AG04450 (cell line): ENCODE measurements at regions of chr18 and their contacts with region 1.

Region 1: DNA sequence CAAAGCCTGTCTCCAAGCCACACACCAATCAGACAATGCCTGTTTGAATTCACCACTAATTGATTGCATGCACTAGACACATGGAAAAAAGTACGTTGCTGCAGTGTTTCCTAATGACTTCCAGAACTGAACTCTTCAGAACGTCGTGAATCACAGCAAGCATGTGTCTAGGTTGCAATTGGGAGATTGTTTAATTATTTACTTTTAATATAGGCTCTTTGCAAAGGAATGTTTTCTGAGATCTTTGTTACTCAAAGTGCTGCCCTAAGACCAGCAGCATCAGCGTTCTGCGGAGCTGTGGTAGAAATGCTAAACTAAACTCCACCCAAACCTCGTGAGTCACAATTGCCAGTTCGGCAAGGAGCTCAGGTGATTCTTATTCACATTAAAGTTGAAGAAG is 52.7 kb upstream of the CCDC68 start:
- DNase-seq: no peak
- H3K4me3 ChIP-seq: no peak overlapping the region
- H3K27ac ChIP-seq: no peak overlapping the region
- H3K27me3 ChIP-seq: no peaks in the 10 kb centered on the region
- CTCF ChIP-seq: no peak

Region 2: GRCh38 chr18:54444319-54444914 is 567.6 kb before region 1 on chr18:
- CTCF ChIA-PET with region 1: interaction called, 10 read pairs
- POLR2A ChIA-PET with region 1: no interaction called
- DNase-seq: peak; percentile 27
- H3K4me3 ChIP-seq: no peak overlapping the region
- H3K27ac ChIP-seq: no peak overlapping the region
- H3K27me3 ChIP-seq: no peaks in the 10 kb centered on the region
- CTCF ChIP-seq: peak; percentile 80

Region 3: GRCh38 chr18:54726143-54726542 is 285.9 kb before region 1 on chr18:
- CTCF ChIA-PET with region 1: no interaction called
- POLR2A ChIA-PET with region 1: no interaction called
- DNase-seq: no peak
- H3K4me3 ChIP-seq: no peak overlapping the region
- H3K27ac ChIP-seq: no peak overlapping the region
- H3K27me3 ChIP-seq: no peaks in the 10 kb centered on the region
- CTCF ChIP-seq: no peak

Region 4: GRCh38 chr18:55024568-55024967 is 12.6 kb after region 1 on chr18:
- CTCF ChIA-PET with region 1: no interaction called
- POLR2A ChIA-PET with region 1: no interaction called
- DNase-seq: no peak
- H3K4me3 ChIP-seq: no peak overlapping the region
- H3K27ac ChIP-seq: no peak overlapping the region
- H3K27me3 ChIP-seq: no peaks in the 10 kb centered on the region
- CTCF ChIP-seq: no peak